CD4-positive, alpha-beta memory T cell (primary cell): ENCODE measurements at regions of chr16 and their contacts with region 1.

Region 1: GRCh38 chr16:57013229-57013628 is 23.9 kb downstream of the NLRC5 start:
- DNase-seq: no peak
- H3K4me3 ChIP-seq: no peak overlapping the region
- H3K4me3 Mint-ChIP-seq: peak overlapping the region in 6 of 8 donors; percentile 63 to 89 (median 78)
- H3K27ac ChIP-seq: peak overlapping the region; percentile 79
- H3K27ac Mint-ChIP-seq: peak overlapping the region; percentile 83 to 98 (median 97)
- H3K4me1 ChIP-seq: peaks cover 98% of the 10 kb centered on the region
- H3K4me1 Mint-ChIP-seq: peaks cover 52 to 90% (median 69%) of the 10 kb centered on the region in 4 donors
- H3K27me3 ChIP-seq: no peaks in the 10 kb centered on the region
- H3K27me3 Mint-ChIP-seq: no peaks in the 10 kb centered on the region

Region 2: GRCh38 chr16:57000271-57001025 is 12.8 kb before region 1 on chr16:
- CTCF ChIA-PET with region 1: interaction called, 11 read pairs
- POLR2A ChIA-PET with region 1: interaction called, 110 read pairs
- intact Hi-C with region 1: no loop called
- DNase-seq: peak in 1 of 5 donors; percentile 77
- H3K4me3 ChIP-seq: peak overlapping the region; percentile 36 to 66
- H3K4me3 Mint-ChIP-seq: peak overlapping the region; percentile 71 to 90 (median 81)
- H3K27ac ChIP-seq: peak overlapping the region; percentile 79
- H3K27ac Mint-ChIP-seq: peak overlapping the region; percentile 89 to 98 (median 97)
- H3K4me1 ChIP-seq: peaks cover 95% of the 10 kb centered on the region
- H3K4me1 Mint-ChIP-seq: peaks cover 69 to 99% (median 84%) of the 10 kb centered on the region in 4 donors
- H3K27me3 ChIP-seq: no peaks in the 10 kb centered on the region
- H3K27me3 Mint-ChIP-seq: no peaks in the 10 kb centered on the region

Region 3: GRCh38 chr16:57039148-57039812 is 26.1 kb after region 1 on chr16:
- CTCF ChIA-PET with region 1: interaction called, 7 read pairs
- POLR2A ChIA-PET with region 1: interaction called, 90 read pairs
- intact Hi-C with region 1: loop called (anchors 1 kb)
- DNase-seq: peak in 3 of 5 donors; percentile 20 to 34 (median 24)
- H3K4me3 ChIP-seq: peak overlapping the region in 1 of 2 donors; percentile 6
- H3K4me3 Mint-ChIP-seq: peak overlapping the region; percentile 32 to 90 (median 76)
- H3K27ac ChIP-seq: peak overlapping the region; percentile 73
- H3K27ac Mint-ChIP-seq: peak overlapping the region; percentile 88 to 98 (median 94)
- H3K4me1 ChIP-seq: peaks cover 95% of the 10 kb centered on the region
- H3K4me1 Mint-ChIP-seq: peaks cover 63 to 95% (median 81%) of the 10 kb centered on the region in 4 donors
- H3K27me3 ChIP-seq: no peaks in the 10 kb centered on the region
- H3K27me3 Mint-ChIP-seq: no peaks in the 10 kb centered on the region